ENCODE measurements at regions of chr2 and their contacts with region 1.

Region 1: GRCh38 chr2:42974721-42975717 is 182.6 kb upstream of the HAAO start:
- DNase-seq: peak; percentile 88
- H3K4me3 ChIP-seq: peak overlapping the region; percentile 46 to 51
- H3K27ac ChIP-seq: peak overlapping the region; percentile 77 to 84
- H3K4me1 ChIP-seq: peaks cover 25% of the 10 kb centered on the region
- H3K27me3 ChIP-seq: no peaks in the 10 kb centered on the region
- CTCF ChIP-seq: peak; percentile 87 to 95 (median 93)
- POLR2A ChIP-seq: no peak

Region 2: GRCh38 chr2:42663106-42663780 is 311.8 kb before region 1 on chr2:
- intact Hi-C with region 1: no loop called
- DNase-seq: peak; percentile 81
- H3K4me3 ChIP-seq: no peak overlapping the region
- H3K27ac ChIP-seq: no peak overlapping the region
- H3K4me1 ChIP-seq: no peaks in the 10 kb centered on the region
- H3K27me3 ChIP-seq: no peaks in the 10 kb centered on the region
- CTCF ChIP-seq: peak; percentile 86 to 93 (median 89)
- POLR2A ChIP-seq: no peak

Region 3: DNA sequence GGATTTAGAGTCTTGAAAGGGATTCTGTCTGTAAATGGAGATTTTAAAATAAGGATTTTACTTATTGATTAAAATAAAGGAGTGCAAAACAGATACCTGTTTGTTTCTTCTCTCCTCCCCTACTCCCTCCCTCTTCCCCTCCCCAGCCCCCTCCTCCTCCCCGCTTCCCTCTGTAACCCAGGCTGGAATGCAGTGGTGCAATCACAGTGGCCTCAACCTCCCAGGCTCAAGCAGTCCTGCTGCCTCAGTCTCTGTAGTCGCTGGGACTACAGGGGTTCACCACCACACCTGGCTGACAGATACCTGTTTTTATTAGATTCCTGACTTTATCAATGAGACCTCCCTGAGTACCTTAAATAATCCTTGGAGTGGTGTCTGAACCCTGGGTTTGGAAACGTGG is 268.2 kb before region 1 on chr2:
- intact Hi-C with region 1: no loop called
- DNase-seq: no peak
- H3K4me3 ChIP-seq: no peak overlapping the region
- H3K27ac ChIP-seq: no peak overlapping the region
- H3K4me1 ChIP-seq: no peaks in the 10 kb centered on the region
- H3K27me3 ChIP-seq: no peaks in the 10 kb centered on the region
- CTCF ChIP-seq: no peak
- POLR2A ChIP-seq: no peak

Region 4: GRCh38 chr2:43024515-43025011 is 49.5 kb after region 1 on chr2:
- intact Hi-C with region 1: loop called (anchors 5 kb)
- DNase-seq: peak; percentile 66
- H3K4me3 ChIP-seq: no peak overlapping the region
- H3K27ac ChIP-seq: no peak overlapping the region
- H3K4me1 ChIP-seq: peaks cover 8% of the 10 kb centered on the region
- H3K27me3 ChIP-seq: no peaks in the 10 kb centered on the region
- CTCF ChIP-seq: peak; percentile 56 to 74 (median 69)
- POLR2A ChIP-seq: no peak

Region 5: DNA sequence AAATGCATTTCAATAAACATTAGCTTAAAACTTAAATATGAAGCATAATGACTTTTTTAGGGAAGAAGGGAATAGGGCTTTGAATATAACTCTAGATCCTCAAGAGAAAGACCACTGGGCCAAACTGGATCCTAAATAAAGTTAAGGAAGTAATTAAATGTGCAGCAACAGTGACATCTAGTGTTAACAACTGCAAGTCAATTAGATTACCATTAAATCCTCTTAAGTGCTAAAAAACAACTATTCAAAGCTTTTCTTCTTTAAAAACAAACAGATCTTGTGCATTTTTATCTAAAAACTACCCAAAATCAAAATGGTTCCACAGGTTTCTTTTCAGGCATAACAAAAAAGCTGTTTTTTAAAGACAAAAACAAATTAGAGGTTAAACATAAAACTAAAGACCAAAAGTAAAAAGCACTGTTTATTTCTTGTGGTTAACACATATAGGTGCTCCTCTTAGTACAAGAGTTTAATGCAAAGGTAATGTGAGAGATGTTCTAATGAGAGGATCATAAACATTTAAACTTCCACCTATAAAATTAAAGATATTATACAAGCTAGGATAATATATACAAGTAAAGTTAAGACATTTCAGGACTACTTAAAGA is 509.4 kb after region 1 on chr2:
- intact Hi-C with region 1: loop called (anchors 10 kb)
- DNase-seq: no peak
- H3K4me3 ChIP-seq: no peak overlapping the region
- H3K27ac ChIP-seq: peak overlapping the region in 1 of 2 donors; percentile 21
- H3K4me1 ChIP-seq: peaks cover 15% of the 10 kb centered on the region
- H3K27me3 ChIP-seq: no peaks in the 10 kb centered on the region
- CTCF ChIP-seq: peak; percentile 43 to 60 (median 57)
- POLR2A ChIP-seq: no peak

Measured in testis (tissue), 5 donors.